ENCODE measurements at regions of chr7 and their contacts with region 1.

Region 1: DNA sequence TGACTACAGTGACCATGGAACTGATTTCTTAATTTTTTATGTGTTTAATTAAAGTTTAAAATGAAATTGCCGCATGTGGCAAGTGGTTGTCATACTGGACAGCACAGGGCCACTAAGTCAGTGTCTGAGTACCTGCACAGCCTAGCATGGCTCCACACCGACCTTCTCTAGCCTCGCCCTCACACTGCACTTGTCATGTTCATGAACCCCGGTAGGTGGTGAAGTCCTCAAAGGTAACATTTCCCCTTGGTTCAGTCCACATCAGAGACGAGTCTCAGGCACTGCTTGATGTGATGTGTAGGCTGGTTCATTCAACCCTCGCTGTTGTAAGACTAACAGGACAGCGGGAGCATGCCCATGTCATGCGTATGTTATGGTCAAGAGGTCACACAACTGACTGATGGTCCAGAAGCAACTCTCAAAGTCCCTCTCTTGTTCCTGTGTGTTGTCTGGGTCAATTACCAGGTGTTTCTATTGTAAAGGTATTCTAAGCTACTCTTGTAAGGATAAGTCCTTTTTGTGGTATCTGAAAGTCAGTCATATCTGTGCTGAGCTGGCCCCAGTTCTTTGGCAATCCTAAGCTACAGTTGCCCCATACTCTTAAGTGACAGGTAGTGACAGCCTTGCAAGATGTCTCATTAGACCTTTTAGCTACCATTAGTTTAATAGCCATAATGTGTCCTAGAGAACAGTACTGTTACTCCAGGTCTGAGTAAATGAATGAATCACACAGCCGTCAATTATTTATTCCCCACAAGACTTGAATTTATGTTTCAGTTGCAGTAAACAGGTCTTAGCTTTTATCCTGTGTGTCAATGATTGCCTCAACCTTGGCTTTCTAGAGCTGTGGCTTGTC is 32.9 kb upstream of the ZC3HAV1L start:
- DNase-seq: no peak
- H3K4me3 ChIP-seq: no peak overlapping the region
- H3K27ac ChIP-seq: no peak overlapping the region
- H3K4me1 ChIP-seq: peaks cover 16% of the 10 kb centered on the region
- H3K27me3 ChIP-seq: no peaks in the 10 kb centered on the region
- CTCF ChIP-seq: no peak

Region 2: GRCh38 chr7:139026551-139026950 is 42.2 kb before region 1 on chr7:
- intact Hi-C with region 1: loop called (anchors 5 kb)
- DNase-seq: no peak
- H3K4me3 ChIP-seq: no peak overlapping the region
- H3K27ac ChIP-seq: no peak overlapping the region
- H3K4me1 ChIP-seq: no peaks in the 10 kb centered on the region
- H3K27me3 ChIP-seq: no peaks in the 10 kb centered on the region
- CTCF ChIP-seq: no peak

Region 3: GRCh38 chr7:139177696-139178095 is 108.9 kb after region 1 on chr7:
- intact Hi-C with region 1: no loop called
- DNase-seq: no peak
- H3K4me3 ChIP-seq: no peak overlapping the region
- H3K27ac ChIP-seq: no peak overlapping the region
- H3K4me1 ChIP-seq: no peaks in the 10 kb centered on the region
- H3K27me3 ChIP-seq: no peaks in the 10 kb centered on the region
- CTCF ChIP-seq: no peak

Measured in left ventricle myocardium inferior (tissue), 1 donor.